ENCODE measurements at regions of chr5 and their contacts with region 1.

Region 1: DNA sequence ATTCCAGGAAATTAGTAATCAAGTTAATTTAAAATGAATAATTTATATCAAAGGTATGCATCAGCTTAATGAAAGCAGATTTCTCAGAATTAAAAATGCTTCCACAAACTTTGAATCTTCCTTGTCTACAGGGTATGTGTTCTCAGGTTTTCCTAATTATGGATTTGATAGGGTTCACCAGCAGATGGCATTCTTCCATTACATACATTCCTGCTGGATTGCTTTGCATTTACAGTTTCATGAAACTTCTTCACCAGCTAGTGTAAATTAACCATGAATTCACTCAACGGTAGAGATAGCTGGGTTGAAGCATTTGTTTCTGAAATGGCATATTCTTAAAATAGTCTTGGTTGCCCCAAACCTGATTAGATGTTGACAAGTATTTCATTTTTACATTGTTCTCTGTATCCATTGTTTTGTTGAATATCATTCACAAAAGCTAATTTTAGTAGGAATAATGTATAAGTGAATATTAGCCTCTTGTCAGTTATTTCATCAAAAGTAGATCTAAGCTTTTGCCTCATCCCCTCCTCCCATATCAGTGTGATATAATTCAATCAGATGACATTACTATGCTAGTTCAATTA is 68.7 kb upstream of the WDR41 start:
- H3K4me3 Mint-ChIP-seq: no peak overlapping the region
- H3K27ac Mint-ChIP-seq: no peak overlapping the region
- H3K4me1 Mint-ChIP-seq: no peaks in the 10 kb centered on the region
- H3K27me3 Mint-ChIP-seq: no peaks in the 10 kb centered on the region

Region 2: DNA sequence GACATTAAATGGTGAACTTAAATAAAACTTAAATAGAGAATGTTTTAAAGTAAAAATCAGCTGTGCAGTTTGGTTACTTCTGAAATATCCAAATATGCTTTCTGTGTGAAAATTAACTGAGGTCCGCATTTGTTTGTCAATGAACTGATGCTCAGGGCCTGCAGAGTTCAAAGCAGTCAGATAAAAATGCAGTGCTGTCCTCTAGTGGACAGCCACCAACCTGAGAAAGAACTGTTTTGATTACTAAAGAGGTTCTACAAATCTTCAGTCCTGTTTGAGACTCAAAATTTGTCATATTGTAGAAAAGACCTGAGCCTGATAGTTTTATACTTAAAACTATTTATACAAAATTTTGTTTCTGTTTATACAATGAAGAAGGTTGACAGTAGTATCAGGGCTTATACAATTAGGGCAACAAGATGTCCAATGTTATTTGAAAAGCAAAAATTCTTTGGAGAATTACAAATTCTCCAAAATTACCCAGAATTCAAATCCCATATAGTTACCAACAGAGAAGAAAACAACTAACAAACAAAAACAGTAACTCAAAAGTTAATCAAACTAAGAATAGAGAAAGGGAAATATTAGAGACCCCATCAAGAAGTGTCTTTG is 447.7 kb after region 1 on chr5:
- intact Hi-C with region 1: loop called (anchors 5 kb)
- H3K4me3 Mint-ChIP-seq: no peak overlapping the region
- H3K27ac Mint-ChIP-seq: no peak overlapping the region
- H3K4me1 Mint-ChIP-seq: peaks cover 13% of the 10 kb centered on the region
- H3K27me3 Mint-ChIP-seq: no peaks in the 10 kb centered on the region

Region 3: DNA sequence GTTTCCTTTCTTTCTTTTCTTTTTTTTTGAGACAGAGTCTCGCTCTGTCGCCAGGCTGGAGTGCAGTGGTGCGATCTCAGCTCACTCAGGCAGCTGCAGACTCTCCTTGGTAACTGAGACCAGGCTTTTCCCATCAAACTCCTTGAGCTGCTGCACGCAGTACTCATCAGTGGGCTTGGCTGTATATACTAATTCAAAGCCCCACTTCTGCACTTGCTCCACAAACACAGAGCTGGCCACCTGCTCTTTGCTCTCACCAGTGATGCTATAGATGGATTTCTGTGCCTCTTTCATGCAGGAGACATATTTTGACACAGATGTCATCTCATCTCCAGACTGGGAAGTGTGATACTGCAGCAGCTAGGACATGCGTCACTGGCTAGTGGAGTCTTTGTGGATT is 481.0 kb after region 1 on chr5:
- intact Hi-C with region 1: no loop called
- H3K4me3 Mint-ChIP-seq: no peak overlapping the region
- H3K27ac Mint-ChIP-seq: no peak overlapping the region
- H3K4me1 Mint-ChIP-seq: no peaks in the 10 kb centered on the region
- H3K27me3 Mint-ChIP-seq: no peaks in the 10 kb centered on the region

Region 4: DNA sequence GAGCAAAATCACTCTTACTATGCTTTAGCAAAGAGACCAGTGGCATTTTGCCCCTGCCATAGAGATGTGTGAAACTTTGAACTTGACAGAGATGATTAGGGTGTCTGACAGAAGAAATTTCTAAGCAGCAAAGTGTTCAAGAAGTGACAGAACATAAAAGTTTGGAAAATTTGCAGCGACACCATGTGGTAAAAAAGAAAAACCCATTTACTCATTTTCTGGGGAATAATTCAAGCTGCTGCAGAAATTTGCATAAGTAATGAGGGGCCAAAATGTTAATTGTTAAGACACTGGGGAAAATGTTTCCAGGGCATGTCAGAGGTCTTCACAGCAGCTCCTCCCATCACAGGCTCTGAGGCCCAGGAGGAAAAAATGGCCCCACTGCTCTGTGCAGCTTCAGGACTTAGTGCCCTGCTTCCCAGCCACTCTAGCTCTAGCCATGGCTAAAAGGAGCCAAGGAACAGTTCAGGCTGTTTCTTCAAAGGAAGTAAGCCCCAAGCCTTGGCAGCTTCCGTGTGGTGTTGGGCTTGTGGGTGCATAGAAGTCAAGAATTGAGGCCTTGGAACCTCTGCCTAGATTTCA is 739.8 kb after region 1 on chr5:
- intact Hi-C with region 1: loop called (anchors 2 kb)
- H3K4me3 Mint-ChIP-seq: no peak overlapping the region
- H3K27ac Mint-ChIP-seq: no peak overlapping the region
- H3K4me1 Mint-ChIP-seq: peaks cover 10% of the 10 kb centered on the region
- H3K27me3 Mint-ChIP-seq: peaks cover 3% of the 10 kb centered on the region